ENCODE measurements at regions of chr5 and their contacts with region 1.

Region 1: GRCh38 chr5:108381954-108382783 is at the start of gene FBXL17:
- DNase-seq: peak; percentile 88
- ATAC-seq: peak; percentile 71
- H3K4me3 Mint-ChIP-seq: peak within 1 kb of the TSS; percentile 96
- H3K27ac Mint-ChIP-seq: peak within 1 kb of the TSS; percentile 98
- H3K4me1 Mint-ChIP-seq: peaks cover 47% of the 10 kb centered on the region
- H3K27me3 Mint-ChIP-seq: no peaks in the 10 kb centered on the region
- CTCF ChIP-seq: no peak
- total RNA-seq, gene FBXL17: 25.8 and 26.9 TPM in 2 replicates

Region 2: DNA sequence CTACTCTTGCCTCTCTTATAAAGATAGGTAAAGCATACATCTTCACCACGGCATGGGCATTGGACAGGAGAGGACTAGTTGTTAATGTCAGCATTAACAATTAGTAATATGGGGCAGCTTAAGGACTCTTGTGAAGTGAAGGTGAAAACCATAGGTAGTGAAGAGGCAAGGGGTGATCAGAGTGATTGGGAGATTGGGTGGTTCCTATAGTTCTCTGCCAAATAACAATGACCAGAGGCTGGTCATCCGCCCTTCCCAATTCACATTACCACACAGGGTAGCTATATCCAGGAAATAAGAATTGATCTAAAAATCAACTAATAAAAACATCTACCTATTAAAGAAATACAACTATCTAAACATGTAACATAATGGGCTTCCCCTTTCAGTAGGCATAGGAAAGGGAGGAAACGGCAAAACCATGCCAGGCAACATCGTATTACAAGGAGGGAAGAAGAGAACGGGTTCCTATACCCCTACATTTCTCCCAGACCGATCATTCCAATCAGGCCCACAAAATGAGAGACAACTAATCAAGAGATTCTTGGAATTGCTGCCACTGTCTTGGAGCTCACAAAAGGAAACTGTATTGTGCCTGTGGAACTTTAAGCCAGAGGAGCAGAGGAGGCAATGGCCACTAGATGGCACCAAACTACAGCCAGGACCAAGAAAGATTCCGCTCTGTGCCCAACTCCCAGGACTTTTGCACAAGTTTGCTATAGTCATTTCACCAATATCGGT is 121.9 kb before region 1 on chr5:
- CTCF ChIA-PET with region 1: interaction called, 10 read pairs
- POLR2A ChIA-PET with region 1: no interaction called
- intact Hi-C with region 1: no loop called
- DNase-seq: no peak
- ATAC-seq: peak; percentile 75
- H3K4me3 Mint-ChIP-seq: peak overlapping the region; percentile 64
- H3K27ac Mint-ChIP-seq: peak overlapping the region; percentile 56
- H3K4me1 Mint-ChIP-seq: peaks cover 7% of the 10 kb centered on the region
- H3K27me3 Mint-ChIP-seq: no peaks in the 10 kb centered on the region
- CTCF ChIP-seq: peak; percentile 64

Region 3: GRCh38 chr5:108345541-108346171 is 36.5 kb before region 1 on chr5:
- CTCF ChIA-PET with region 1: no interaction called
- POLR2A ChIA-PET with region 1: interaction called, 6 read pairs
- intact Hi-C with region 1: loop called (anchors 2 kb)
- DNase-seq: no peak
- ATAC-seq: no peak
- H3K4me3 Mint-ChIP-seq: no peak overlapping the region
- H3K27ac Mint-ChIP-seq: no peak overlapping the region
- H3K4me1 Mint-ChIP-seq: no peaks in the 10 kb centered on the region
- H3K27me3 Mint-ChIP-seq: no peaks in the 10 kb centered on the region
- CTCF ChIP-seq: no peak

Region 4: DNA sequence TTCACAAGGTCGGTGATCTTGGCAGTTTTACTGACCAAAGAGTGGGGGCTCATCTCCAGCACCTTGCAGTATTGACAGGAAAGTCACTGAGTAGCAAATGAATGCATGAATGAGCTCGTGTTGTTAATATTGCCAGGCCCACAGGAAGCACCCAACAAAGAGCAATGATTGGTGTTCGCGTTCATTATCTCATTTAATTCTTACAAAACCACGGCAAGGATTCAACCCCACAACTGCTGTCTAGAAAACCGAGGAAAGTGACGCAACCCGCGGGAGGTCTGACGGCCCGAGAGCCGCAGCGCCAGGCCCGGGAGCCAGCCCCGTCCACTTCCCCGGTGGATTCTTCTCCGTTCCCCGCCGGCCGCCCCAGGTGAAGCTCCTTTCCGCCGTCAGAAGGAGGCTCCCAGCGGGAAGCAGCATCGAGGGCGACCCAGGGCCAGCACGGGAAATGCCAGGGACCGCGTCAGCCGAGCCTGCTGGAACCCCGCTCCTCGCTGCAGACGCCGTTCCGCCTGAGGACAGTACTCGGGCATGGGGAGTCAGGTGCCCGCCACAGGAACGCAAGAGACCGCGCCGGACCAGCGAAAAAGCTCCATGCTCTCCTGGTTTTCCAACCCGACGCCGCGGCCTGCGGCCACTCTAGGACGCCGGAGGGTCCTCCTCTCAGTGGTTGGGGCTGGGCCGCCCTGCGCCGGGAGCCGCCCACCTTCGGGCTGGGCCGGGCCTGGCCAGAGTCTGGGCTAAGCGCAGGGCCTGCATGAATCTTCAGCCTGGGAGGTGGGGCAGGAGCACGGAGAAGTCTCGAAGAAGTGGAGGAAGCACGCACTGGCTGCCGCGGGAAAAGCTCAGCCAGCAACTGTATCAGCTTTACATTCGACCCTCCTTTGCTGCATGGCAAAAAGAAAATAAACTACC is 345.7 kb after region 1 on chr5:
- CTCF ChIA-PET with region 1: no interaction called
- POLR2A ChIA-PET with region 1: interaction called, 15 read pairs
- intact Hi-C with region 1: loop called (anchors 1 kb)
- DNase-seq: peak; percentile 62
- ATAC-seq: peak; percentile 84
- H3K4me3 Mint-ChIP-seq: peak overlapping the region; percentile 85
- H3K27ac Mint-ChIP-seq: peak overlapping the region; percentile 96
- H3K4me1 Mint-ChIP-seq: peaks cover 50% of the 10 kb centered on the region
- H3K27me3 Mint-ChIP-seq: no peaks in the 10 kb centered on the region
- CTCF ChIP-seq: no peak

Region 5: DNA sequence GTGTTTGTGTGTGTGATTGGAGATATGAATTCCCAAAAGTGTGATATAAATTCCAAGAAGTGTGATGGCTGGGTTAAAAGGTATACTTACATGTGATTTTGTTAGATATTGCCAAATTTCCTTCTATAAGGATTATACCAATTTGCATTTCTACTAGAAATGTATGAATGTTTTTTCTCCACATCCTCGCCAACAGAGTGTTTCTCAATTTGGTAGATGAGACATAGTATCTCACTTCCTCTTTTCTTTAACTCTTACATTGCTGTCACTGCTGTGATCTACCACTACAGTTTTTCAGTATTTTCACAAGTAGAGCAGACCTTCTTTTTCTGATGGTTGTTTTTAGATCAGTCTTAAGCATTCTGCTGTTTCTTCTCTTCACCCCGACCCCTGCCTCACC is 476.8 kb after region 1 on chr5:
- CTCF ChIA-PET with region 1: no interaction called
- POLR2A ChIA-PET with region 1: no interaction called
- intact Hi-C with region 1: loop called (anchors 2 kb)
- DNase-seq: no peak
- ATAC-seq: peak; percentile 90
- H3K4me3 Mint-ChIP-seq: peak overlapping the region; percentile 25
- H3K27ac Mint-ChIP-seq: no peak overlapping the region
- H3K4me1 Mint-ChIP-seq: peaks cover 13% of the 10 kb centered on the region
- H3K27me3 Mint-ChIP-seq: no peaks in the 10 kb centered on the region
- CTCF ChIP-seq: no peak

Region 6: DNA sequence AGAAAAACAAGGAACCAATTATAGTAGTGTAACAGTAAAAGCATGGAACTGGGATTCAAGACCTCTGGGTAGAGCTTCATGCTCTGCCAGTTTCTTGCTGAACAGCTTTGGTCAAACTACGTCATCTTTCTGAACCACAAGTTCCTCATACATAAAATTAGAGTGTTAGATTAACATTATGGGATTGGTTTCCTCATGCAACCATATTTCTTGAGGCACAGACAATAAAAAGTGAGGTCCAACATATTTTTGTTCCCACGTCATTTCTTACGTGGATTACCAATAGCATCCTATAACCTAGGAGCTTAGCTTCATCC is 1989.5 kb after region 1 on chr5:
- CTCF ChIA-PET with region 1: no interaction called
- POLR2A ChIA-PET with region 1: no interaction called
- intact Hi-C with region 1: loop called (anchors 10 kb)
- DNase-seq: no peak
- ATAC-seq: peak; percentile 87
- H3K4me3 Mint-ChIP-seq: peak overlapping the region; percentile 55
- H3K27ac Mint-ChIP-seq: peak overlapping the region; percentile 20
- H3K4me1 Mint-ChIP-seq: peaks cover 22% of the 10 kb centered on the region
- H3K27me3 Mint-ChIP-seq: no peaks in the 10 kb centered on the region
- CTCF ChIP-seq: no peak

Measured in activated B cell treated with CpG ODN at 0.5 μM for 24 hours (primary cell).